ENCODE measurements at regions of chr11 and their contacts with region 1.

Region 1: GRCh38 chr11:4094348-4095291 is at the start of gene RRM1:
- DNase-seq: peak; percentile 89
- ATAC-seq: peak; percentile 99
- H3K4me3 ChIP-seq: peak within 1 kb of the TSS; percentile 64 to 88
- H3K27ac ChIP-seq: peak within 1 kb of the TSS; percentile 96
- H3K4me1 ChIP-seq: peaks cover 3% of the 10 kb centered on the region; the same call in 1 of the 2 replicates
- H3K27me3 ChIP-seq: no peaks in the 10 kb centered on the region
- CTCF ChIP-seq: no peak
- total RNA-seq, gene RRM1: 143 TPM

Region 2: GRCh38 chr11:4044976-4045646 is 49.5 kb before region 1 on chr11:
- CTCF ChIA-PET with region 1: interaction called, 10 read pairs
- POLR2A ChIA-PET with region 1: no interaction called
- in situ Hi-C with region 1: no loop called
- intact Hi-C with region 1: no loop called
- DNase-seq: no peak
- ATAC-seq: peak; percentile 67
- H3K4me3 ChIP-seq: no peak overlapping the region
- H3K27ac ChIP-seq: no peak overlapping the region
- H3K4me1 ChIP-seq: no peaks in the 10 kb centered on the region
- H3K27me3 ChIP-seq: no peaks in the 10 kb centered on the region
- CTCF ChIP-seq: no peak

Region 3: DNA sequence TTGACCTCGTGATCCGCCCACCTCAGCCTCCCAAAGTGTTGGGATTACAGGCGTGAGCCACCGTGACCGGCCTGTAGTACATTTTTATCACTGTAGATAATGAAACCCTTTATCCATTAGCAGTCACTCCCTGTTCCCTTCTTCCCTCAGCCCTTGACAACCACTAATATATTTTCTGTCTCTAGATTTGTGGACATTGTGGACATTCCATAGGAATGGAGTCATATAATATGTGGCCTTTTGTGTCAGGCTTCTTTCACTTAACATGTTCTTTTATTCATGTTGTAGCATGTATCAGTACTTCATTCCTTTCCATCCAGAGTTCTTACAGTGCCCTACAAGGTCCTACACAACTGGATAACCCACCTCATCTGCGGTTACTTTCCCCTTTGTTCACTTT is 30.5 kb after region 1 on chr11:
- CTCF ChIA-PET with region 1: interaction called, 10 read pairs
- POLR2A ChIA-PET with region 1: no interaction called
- in situ Hi-C with region 1: no loop called
- intact Hi-C with region 1: no loop called
- DNase-seq: no peak
- ATAC-seq: no peak
- H3K4me3 ChIP-seq: no peak overlapping the region
- H3K27ac ChIP-seq: no peak overlapping the region
- H3K4me1 ChIP-seq: no peaks in the 10 kb centered on the region
- H3K27me3 ChIP-seq: no peaks in the 10 kb centered on the region
- CTCF ChIP-seq: no peak

Region 4: GRCh38 chr11:4647766-4648165 is 553.1 kb after region 1 on chr11:
- CTCF ChIA-PET with region 1: no interaction called
- POLR2A ChIA-PET with region 1: no interaction called
- in situ Hi-C with region 1: no loop called
- intact Hi-C with region 1: no loop called
- DNase-seq: no peak
- ATAC-seq: no peak
- H3K4me3 ChIP-seq: no peak overlapping the region
- H3K27ac ChIP-seq: no peak overlapping the region
- H3K4me1 ChIP-seq: no peaks in the 10 kb centered on the region
- H3K27me3 ChIP-seq: peaks cover 7% of the 10 kb centered on the region
- CTCF ChIP-seq: no peak